ENCODE measurements at regions of chr5 and their contacts with region 1.

Region 1: GRCh38 chr5:74766849-74767578 is at the starts of genes GFM2 and NSA2:
- DNase-seq: peak; percentile 91
- H3K4me3 Mint-ChIP-seq: peak within 1 kb of the TSS; percentile 100
- H3K27ac Mint-ChIP-seq: peak within 1 kb of the TSS; percentile 98
- H3K4me1 Mint-ChIP-seq: peaks cover 29% of the 10 kb centered on the region
- H3K27me3 Mint-ChIP-seq: no peaks in the 10 kb centered on the region
- total RNA-seq, gene GFM2: 32.9 and 34.6 TPM in 2 replicates
- total RNA-seq, gene NSA2: 83.9 and 91.4 TPM in 2 replicates

Region 2: DNA sequence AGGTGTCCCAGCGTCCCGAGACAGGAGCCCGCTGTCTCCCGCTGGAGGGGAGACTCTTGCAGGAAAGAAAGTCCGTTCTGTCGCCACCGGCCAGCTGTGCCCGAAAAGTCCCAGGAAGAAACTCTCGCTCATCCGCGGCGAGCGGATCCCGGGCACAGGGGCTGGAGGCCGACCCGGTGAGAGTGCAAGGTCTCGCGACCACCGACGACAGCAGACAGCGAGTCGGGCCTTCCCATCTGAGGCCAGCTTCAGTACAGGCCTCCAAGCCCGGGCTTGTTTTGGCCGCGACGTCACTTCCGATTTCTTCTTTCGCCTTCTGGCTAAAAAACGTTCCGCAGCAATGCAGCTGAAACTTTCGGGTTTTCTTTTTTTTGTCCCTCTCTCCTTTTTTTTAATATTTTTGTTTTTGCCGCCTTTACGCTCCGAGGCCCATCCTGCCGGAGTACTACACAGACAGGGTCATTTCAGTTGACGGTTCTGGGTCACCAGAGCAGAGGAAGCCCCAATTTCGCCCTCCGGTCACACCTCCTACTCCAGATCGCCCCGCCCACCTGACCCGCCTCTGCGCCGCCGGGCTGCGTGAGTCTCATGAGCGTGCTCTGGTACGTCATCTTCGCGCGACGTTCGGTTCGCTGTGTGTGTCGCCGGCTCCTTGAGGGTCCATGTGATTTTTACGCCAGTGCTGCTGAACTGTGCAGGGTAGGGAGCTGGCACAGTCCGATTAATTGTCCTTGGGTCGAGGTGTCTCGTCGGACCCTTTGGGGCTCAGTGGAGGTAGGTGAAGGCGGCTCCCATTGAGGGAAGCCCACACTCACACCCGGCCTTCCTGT is 1201.7 kb before region 1 on chr5 and contains the starts of genes ANKRA2 and UTP15:
- intact Hi-C with region 1: loop called (anchors 2 kb)
- DNase-seq: peak; percentile 97
- H3K4me3 Mint-ChIP-seq: peak within 1 kb of the TSS; percentile 96
- H3K27ac Mint-ChIP-seq: peak within 1 kb of the TSS; percentile 95
- H3K4me1 Mint-ChIP-seq: peaks cover 25% of the 10 kb centered on the region
- H3K27me3 Mint-ChIP-seq: no peaks in the 10 kb centered on the region
- total RNA-seq, gene ANKRA2: 18.7 and 19.6 TPM in 2 replicates
- total RNA-seq, gene UTP15: 46.0 and 47.0 TPM in 2 replicates

Region 3: GRCh38 chr5:74684900-74685851 is 81.8 kb before region 1 on chr5 and contains the start of gene HEXB:
- intact Hi-C with region 1: loop called (anchors 2 kb)
- DNase-seq: peak; percentile 79
- H3K4me3 Mint-ChIP-seq: peak within 1 kb of the TSS; percentile 81
- H3K27ac Mint-ChIP-seq: peak within 1 kb of the TSS; percentile 23
- H3K4me1 Mint-ChIP-seq: peaks cover 17% of the 10 kb centered on the region
- H3K27me3 Mint-ChIP-seq: peaks cover 17% of the 10 kb centered on the region
- total RNA-seq, gene HEXB: 56.6 and 59.0 TPM in 2 replicates

Region 4: DNA sequence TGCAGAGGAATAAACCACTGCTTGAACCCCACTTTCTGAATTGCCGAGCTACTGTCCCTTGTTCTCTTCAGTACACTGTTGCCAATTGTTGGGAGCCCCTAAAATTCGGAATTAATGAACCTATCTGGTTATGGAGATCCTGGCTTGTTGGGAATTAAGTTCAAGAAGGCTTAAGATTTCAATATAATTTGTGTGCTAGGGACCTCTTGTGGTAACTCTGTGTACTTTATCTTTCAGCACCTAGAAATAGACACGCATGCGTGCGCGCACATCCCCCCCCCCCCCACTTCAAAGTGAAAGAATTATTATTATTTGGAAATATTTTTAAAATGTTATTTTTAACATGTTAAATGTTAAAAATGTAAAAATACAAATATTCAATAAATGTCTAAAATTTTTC is 152.5 kb after region 1 on chr5:
- intact Hi-C with region 1: loop called (anchors 2 kb)
- DNase-seq: no peak
- H3K4me3 Mint-ChIP-seq: no peak overlapping the region
- H3K27ac Mint-ChIP-seq: no peak overlapping the region
- H3K4me1 Mint-ChIP-seq: no peaks in the 10 kb centered on the region
- H3K27me3 Mint-ChIP-seq: peaks cover 2% of the 10 kb centered on the region

Region 5: DNA sequence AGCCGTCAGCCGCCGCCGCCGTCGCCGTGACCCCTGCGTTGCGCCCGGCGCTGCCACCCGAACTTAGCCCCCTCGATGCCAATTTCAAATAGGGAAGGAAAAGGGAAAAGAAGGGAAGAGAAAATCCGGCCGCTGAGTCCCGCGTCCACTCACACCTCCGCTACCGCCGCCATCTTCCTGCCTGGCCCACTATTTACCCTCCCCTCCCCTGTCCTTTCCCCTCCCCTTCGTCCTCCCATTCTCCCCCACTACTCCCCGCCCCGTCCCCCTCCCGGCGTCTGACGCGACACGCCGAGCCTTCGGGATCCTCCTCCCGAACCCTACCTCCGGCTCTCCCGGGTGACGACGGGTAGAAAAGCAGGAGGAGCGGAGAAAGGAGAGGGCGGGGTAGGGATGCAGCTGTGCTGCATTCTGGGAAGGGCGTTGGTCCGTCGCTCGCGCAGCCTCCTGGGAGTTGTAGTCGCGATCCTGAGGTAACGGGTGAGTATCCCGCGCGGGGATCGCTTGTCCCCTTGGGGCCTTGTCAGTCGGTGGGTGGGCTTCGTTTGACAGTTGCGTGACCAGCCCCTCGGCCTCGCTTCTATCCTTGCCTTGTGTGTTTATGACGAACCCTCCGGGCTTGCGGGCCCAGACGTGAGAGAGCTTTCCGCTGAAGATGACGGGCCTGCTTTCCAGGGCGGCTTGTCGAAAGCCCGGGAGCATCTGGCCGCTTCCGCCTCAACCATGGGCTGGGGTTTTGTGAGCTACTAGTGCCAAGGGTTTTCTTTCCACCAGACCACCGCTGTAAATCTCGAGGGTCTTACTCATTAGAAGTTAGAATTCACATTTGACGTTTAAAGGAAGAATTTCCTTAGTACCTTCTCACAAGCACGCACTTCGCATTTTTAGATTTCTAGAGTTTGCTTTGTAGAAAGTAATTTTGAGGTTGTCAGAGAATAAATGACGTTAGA is 744.7 kb after region 1 on chr5 and contains the starts of genes CERT1 and POLK:
- intact Hi-C with region 1: loop called (anchors 10 kb)
- DNase-seq: peak; percentile 95
- H3K4me3 Mint-ChIP-seq: peak within 1 kb of the TSS; percentile 100
- H3K27ac Mint-ChIP-seq: peak within 1 kb of the TSS; percentile 90
- H3K4me1 Mint-ChIP-seq: peaks cover 51% of the 10 kb centered on the region
- H3K27me3 Mint-ChIP-seq: no peaks in the 10 kb centered on the region
- total RNA-seq, gene CERT1: 38.6 and 43.7 TPM in 2 replicates
- total RNA-seq, gene POLK: 41.4 and 42.6 TPM in 2 replicates